Activated B cell treated with CpG ODN at 0.5 μM for 24 hours (primary cell): ENCODE measurements at regions of chr11 and their contacts with region 1.

Region 1: DNA sequence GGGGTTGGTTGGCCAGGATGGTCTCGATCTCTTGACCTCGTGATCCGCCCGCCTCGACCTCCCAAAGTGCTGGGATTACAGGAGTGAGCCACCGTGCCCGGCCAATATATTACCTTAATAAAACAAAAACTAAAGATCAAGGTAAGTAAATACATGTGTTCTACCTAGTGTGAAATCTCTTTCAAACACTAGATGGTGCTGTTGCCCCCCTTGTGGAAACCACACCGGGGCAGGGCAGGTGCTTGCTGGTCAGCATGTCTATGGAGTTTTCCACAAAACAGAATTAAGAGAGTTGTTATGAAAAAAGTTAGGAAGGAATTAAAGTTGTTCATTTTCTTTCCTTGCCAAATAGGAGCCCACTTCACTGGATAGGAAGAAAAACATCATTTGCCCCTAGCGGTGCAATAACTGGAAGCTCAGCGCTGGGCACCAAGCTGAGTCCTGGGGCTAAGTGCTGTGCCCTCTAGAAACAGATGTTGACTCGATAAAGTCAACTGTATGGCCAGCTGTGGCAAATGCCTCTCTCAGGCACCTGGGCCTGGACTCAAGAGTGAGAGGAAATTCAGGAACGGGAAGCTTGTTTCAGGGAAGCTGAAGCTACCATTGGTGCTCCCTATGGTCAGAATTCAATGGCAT is 6.3 kb upstream of the KCNJ5 start:
- DNase-seq: no peak
- ATAC-seq: peak; percentile 84
- H3K4me3 Mint-ChIP-seq: no peak overlapping the region
- H3K27ac Mint-ChIP-seq: no peak overlapping the region
- H3K4me1 Mint-ChIP-seq: no peaks in the 10 kb centered on the region
- H3K27me3 Mint-ChIP-seq: peaks cover 70% of the 10 kb centered on the region
- CTCF ChIP-seq: peak; percentile 74

Region 2: DNA sequence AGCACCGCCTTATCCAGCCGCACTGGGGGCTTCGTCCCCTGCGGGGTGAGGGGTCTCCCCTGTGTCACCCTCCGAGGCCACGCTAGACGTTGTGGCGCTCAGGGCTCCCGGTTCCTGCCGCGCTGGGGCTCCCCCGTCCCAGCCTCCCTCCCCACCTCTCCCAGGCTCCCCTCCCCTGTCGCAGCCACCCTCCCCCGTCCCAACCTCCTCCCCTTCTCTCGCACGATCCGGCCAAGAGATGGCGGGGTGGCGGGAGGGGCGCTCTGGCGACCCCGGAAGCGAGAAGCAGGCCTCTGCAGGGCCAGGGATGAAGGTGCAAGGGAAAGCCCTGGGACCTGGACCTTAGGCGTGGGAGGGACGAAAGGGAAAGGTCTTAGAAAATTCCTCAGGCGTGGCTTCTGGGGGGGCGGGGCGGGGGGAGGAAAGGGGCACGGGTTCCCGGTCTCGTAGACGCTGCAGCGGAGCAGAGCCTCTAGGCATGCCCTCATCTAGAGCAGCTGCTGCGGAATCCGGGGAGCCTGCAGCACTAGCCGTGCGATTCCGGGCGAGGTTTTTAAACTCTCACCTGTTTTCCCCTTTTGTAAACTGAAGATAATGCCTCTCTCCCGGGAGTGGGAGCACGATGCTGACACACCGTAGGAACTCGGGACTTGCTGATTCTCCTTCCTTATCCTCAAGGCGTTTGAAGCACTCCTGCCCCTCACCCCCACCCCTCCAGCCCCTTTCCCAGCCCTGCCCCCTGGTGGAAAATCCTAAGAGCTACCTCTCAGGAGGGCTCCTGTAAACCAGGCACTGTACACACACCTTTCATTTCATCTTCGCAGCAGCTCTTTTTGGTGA is 20.7 kb after region 1 on chr11:
- CTCF ChIA-PET with region 1: interaction called, 30 read pairs
- POLR2A ChIA-PET with region 1: no interaction called
- intact Hi-C with region 1: loop called (anchors 1 kb)
- DNase-seq: peak; percentile 48
- ATAC-seq: peak; percentile 56
- H3K4me3 Mint-ChIP-seq: peak overlapping the region; percentile 79
- H3K27ac Mint-ChIP-seq: no peak overlapping the region
- H3K4me1 Mint-ChIP-seq: peaks cover 26% of the 10 kb centered on the region
- H3K27me3 Mint-ChIP-seq: peaks cover 48% of the 10 kb centered on the region
- CTCF ChIP-seq: no peak

Region 3: DNA sequence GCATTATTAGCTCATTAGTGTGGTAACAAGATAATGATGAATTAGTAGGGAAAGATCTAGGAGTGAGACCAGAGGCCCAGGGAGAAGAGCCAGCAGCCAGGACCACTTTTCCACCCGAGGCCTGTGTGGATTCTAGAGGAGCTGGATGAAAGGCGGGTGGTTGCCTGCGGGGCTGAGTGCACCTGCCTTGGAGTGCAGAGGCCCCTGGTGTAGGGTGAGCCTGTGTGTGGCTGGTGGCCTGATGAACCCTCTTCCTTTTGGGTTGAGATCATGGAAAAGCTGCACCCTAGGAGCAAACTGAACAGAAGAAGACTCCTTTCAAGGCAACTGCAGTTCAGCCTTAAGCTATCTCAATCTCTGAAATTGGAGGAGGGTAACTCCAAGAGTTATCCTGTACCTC is 63.8 kb after region 1 on chr11:
- CTCF ChIA-PET with region 1: interaction called, 172 read pairs
- POLR2A ChIA-PET with region 1: no interaction called
- intact Hi-C with region 1: no loop called
- DNase-seq: no peak
- ATAC-seq: no peak
- H3K4me3 Mint-ChIP-seq: no peak overlapping the region
- H3K27ac Mint-ChIP-seq: no peak overlapping the region
- H3K4me1 Mint-ChIP-seq: no peaks in the 10 kb centered on the region
- H3K27me3 Mint-ChIP-seq: peaks cover 39% of the 10 kb centered on the region
- CTCF ChIP-seq: no peak

Region 4: GRCh38 chr11:128956401-128957201 is 71.8 kb after region 1 on chr11:
- CTCF ChIA-PET with region 1: interaction called, 172 read pairs
- POLR2A ChIA-PET with region 1: interaction called, 4 read pairs
- intact Hi-C with region 1: loop called (anchors 1 kb)
- DNase-seq: no peak
- ATAC-seq: peak; percentile 49
- H3K4me3 Mint-ChIP-seq: no peak overlapping the region
- H3K27ac Mint-ChIP-seq: no peak overlapping the region
- H3K4me1 Mint-ChIP-seq: peaks cover 2% of the 10 kb centered on the region
- H3K27me3 Mint-ChIP-seq: peaks cover 14% of the 10 kb centered on the region
- CTCF ChIP-seq: peak; percentile 31

Region 5: GRCh38 chr11:129023970-129024676 is 139.3 kb after region 1 on chr11:
- CTCF ChIA-PET with region 1: no interaction called
- POLR2A ChIA-PET with region 1: no interaction called
- intact Hi-C with region 1: no loop called
- DNase-seq: no peak
- ATAC-seq: no peak
- H3K4me3 Mint-ChIP-seq: no peak overlapping the region
- H3K27ac Mint-ChIP-seq: no peak overlapping the region
- H3K4me1 Mint-ChIP-seq: peaks cover 8% of the 10 kb centered on the region
- H3K27me3 Mint-ChIP-seq: peaks cover 6% of the 10 kb centered on the region
- CTCF ChIP-seq: no peak

Region 6: GRCh38 chr11:129117595-129118350 is 233.0 kb after region 1 on chr11:
- CTCF ChIA-PET with region 1: no interaction called
- POLR2A ChIA-PET with region 1: no interaction called
- intact Hi-C with region 1: loop called (anchors 2 kb)
- DNase-seq: no peak
- ATAC-seq: no peak
- H3K4me3 Mint-ChIP-seq: no peak overlapping the region
- H3K27ac Mint-ChIP-seq: no peak overlapping the region
- H3K4me1 Mint-ChIP-seq: no peaks in the 10 kb centered on the region
- H3K27me3 Mint-ChIP-seq: no peaks in the 10 kb centered on the region
- CTCF ChIP-seq: peak; percentile 92

Region 7: GRCh38 chr11:129331871-129332274 is 447.1 kb after region 1 on chr11:
- CTCF ChIA-PET with region 1: interaction called, 5 read pairs
- POLR2A ChIA-PET with region 1: no interaction called
- intact Hi-C with region 1: loop called (anchors 1 kb)
- DNase-seq: peak; percentile 38
- ATAC-seq: no peak
- H3K4me3 Mint-ChIP-seq: no peak overlapping the region
- H3K27ac Mint-ChIP-seq: no peak overlapping the region
- H3K4me1 Mint-ChIP-seq: peaks cover 2% of the 10 kb centered on the region
- H3K27me3 Mint-ChIP-seq: no peaks in the 10 kb centered on the region
- CTCF ChIP-seq: peak; percentile 72